ENCODE measurements at regions of chr5 and their contacts with region 1.

Region 1: DNA sequence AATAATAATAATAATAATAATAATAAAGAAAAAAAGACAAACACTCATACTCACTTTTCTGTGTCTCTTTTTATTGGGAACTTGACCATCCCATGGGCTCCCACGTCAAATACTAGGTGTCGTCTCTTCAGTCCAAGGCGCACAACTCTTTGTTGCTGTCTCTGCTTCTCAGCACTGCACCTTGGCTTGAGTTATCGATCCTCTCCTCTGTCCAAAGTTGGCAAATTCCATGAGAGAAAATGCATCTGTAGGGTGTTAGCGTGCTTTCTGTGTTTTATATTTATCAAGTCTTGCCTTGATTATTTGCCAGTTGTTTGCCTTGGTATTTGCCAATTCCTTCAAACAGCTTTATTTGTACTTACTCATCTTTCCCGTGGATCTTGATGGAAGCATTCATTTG is 653.7 kb downstream of the CDH18 start:
- DNase-seq: no peak
- H3K4me3 Mint-ChIP-seq: no peak overlapping the region
- H3K27ac Mint-ChIP-seq: no peak overlapping the region
- H3K4me1 Mint-ChIP-seq: no peaks in the 10 kb centered on the region
- H3K27me3 Mint-ChIP-seq: no peaks in the 10 kb centered on the region

Region 2: DNA sequence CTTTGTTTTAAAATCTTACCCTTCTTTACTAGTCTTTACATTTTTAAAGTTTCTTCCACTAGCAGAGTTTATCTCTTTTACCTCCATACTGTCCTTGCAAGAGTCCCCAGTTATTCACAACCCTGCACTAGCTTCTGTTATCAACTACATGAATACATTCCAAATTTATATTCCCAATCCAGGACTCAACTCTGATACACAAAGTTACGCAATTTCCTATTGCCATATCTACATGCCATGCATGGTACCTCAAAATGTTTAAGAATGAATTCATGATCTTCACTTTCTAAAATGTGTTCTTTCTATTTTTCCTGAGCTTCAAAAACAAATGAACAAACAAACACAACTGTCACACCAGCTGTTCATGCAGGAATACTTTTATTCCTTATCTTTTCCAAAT is 15.0 kb before region 1 on chr5:
- intact Hi-C with region 1: loop called (anchors 1 kb)
- DNase-seq: no peak
- H3K4me3 Mint-ChIP-seq: no peak overlapping the region
- H3K27ac Mint-ChIP-seq: no peak overlapping the region
- H3K4me1 Mint-ChIP-seq: no peaks in the 10 kb centered on the region
- H3K27me3 Mint-ChIP-seq: no peaks in the 10 kb centered on the region

Measured in activated T-helper 1 cell treated with anti-CD3 and anti-CD28 coated beads, Interleukin-12 subunit alpha, Interleukin-12 subunit beta, Interleukin-2, Interleukin-4 antibody, amounts not matched to agents 30 ng/mL and 10 ng/mL and 1 ng/mL, durations not matched to agents 14 hours and 24 hours and 36 hours (primary cell).